Endothelial cell of umbilical vein (primary cell): ENCODE measurements at regions of chr12 and their contacts with region 1.

Region 1: GRCh38 chr12:52980693-52981423 is 25.4 kb upstream of the EIF4B start:
- DNase-seq: peak; percentile 91
- H3K4me3 ChIP-seq: no peak overlapping the region
- H3K27ac ChIP-seq: no peak overlapping the region
- H3K4me1 ChIP-seq: no peaks in the 10 kb centered on the region
- H3K27me3 ChIP-seq: peaks cover 3 to 4% of the 10 kb centered on the region in 2 experiments
- CTCF ChIP-seq: peak; percentile 92 to 100
- POLR2A ChIP-seq: no peak

Region 2: DNA sequence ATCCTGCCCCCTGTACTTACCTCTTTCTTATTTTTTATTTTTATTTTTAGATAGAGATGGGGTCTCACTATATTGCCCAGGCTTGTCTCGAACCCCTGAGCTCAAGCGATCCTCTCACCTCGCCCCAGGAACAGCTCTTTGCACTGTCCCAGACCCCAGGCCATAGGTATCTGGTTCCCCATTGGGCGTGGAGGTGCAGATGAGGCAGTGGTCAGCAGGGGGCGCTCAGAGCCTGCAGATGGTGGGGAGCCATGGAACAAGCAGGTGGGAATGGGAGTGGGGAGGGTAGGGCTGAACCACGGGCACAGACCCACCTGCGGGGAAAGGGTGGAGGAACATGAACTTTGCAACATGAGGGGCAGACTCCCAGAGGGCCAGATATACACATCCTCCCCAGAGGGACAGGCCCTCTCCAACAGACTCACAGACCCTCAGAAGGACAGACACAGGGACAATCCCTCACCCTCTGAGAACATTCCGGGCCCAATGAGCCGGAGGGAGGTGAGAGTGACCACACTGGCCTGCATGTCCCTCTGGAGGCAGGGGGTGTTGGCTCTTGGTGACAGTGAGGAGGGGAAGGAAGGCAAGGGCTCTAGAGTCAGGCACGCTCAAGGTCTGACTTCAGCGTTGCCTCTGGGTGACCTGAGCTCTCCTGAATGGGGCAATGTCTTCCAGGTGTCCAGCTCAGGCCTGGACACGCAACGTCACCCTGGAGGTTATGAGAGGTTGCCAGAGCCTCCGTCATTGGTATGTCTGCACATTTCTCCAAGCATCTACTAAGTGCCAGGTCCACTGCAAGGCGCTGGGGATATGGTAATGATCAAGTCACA is 823.9 kb before region 1 on chr12:
- CTCF ChIA-PET with region 1: interaction called, 5 read pairs
- POLR2A ChIA-PET with region 1: no interaction called
- dilution Hi-C with region 1: no loop called
- intact Hi-C with region 1: loop called (anchors 10 kb)
- DNase-seq: peak; percentile 58
- H3K4me3 ChIP-seq: no peak overlapping the region
- H3K27ac ChIP-seq: no peak overlapping the region
- H3K4me1 ChIP-seq: peaks cover 2% of the 10 kb centered on the region
- H3K27me3 ChIP-seq: no peaks in the 10 kb centered on the region
- CTCF ChIP-seq: peak; percentile 93 to 94
- POLR2A ChIP-seq: no peak

Region 3: DNA sequence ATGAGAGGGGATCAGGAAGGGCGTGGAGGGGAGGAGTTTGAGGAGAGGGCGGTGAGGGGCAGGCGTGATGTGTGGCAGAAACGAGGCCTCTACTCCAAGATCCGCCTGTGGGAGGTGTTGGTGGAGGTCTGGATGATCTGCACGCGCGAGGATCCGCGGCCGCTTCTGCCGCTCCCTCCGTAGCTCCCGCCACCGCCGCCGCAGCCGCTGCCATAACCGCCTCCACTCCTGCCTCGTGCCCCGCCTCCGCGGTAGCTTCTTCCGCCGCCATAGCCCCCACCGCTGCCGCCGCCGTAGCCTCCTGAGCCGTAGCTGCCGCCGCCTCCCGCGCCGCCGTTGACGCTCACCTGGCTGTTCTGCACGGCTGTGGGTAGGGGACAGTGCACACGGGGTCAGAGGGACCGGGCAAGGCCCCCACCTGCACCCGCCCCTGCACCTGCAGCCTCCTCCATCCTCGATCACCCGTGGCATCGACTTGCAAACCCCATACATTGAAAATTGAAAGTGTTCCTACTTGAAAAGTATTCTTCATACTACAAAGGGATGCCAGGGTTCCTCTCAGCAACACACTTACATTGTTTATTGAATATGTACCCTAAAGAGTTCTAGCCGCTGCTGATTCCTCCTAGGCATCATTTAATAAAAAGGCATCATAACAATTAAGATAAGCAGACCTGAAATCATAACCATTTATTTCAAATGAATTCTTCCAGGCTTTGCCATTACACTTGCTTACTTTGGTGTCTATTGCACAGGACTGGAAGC is 289.6 kb before region 1 on chr12:
- CTCF ChIA-PET with region 1: no interaction called
- POLR2A ChIA-PET with region 1: no interaction called
- dilution Hi-C with region 1: no loop called
- intact Hi-C with region 1: loop called (anchors 5 kb)
- DNase-seq: no peak
- H3K4me3 ChIP-seq: no peak overlapping the region
- H3K27ac ChIP-seq: no peak overlapping the region
- H3K4me1 ChIP-seq: no peaks in the 10 kb centered on the region
- H3K27me3 ChIP-seq: peaks cover 25 to 40% of the 10 kb centered on the region in 2 experiments
- CTCF ChIP-seq: no peak
- POLR2A ChIP-seq: no peak

Region 4: DNA sequence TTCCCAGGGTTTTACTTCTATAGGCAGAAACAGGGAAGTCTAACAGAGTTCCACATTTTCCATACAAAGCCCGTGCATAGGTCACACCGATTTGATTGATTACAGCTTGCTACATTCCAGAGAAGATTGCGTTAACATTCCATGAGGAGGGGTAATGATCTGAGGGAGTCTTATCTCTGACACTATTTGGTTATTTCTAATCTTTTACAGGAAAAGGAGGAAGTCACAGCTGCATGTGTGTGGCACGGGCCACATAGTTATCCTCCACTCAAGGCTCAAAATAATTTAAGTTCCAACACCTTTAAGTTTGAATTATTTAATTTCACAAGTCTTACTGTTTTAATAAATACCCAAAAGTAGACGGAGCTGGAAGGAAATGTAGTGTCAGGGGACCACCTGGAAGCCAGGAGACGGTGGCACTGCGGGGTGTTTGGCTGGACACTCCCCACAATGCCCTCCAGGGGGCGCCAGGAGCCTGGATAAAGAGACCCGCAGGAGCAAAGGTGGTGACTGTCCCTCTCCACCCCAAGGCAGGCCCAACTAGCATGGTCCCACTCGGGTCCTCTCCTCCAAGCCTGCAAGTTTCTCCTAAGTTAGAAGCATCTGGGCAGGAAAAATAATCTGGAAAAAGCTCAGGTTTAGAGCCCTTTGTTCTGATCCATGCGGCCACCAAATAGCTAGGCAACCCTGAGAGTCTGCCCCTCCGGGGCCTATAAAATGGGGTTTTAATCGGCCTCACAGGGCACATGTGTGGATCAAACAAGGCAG is 96.1 kb before region 1 on chr12:
- CTCF ChIA-PET with region 1: interaction called, 921 read pairs
- POLR2A ChIA-PET with region 1: no interaction called
- dilution Hi-C with region 1: loop called (anchors 25 kb)
- intact Hi-C with region 1: loop called (anchors 1 kb)
- DNase-seq: peak; percentile 60
- H3K4me3 ChIP-seq: no peak overlapping the region
- H3K27ac ChIP-seq: no peak overlapping the region
- H3K4me1 ChIP-seq: no peaks in the 10 kb centered on the region
- H3K27me3 ChIP-seq: no peaks in the 10 kb centered on the region
- CTCF ChIP-seq: peak; percentile 89 to 92
- POLR2A ChIP-seq: no peak

Region 5: DNA sequence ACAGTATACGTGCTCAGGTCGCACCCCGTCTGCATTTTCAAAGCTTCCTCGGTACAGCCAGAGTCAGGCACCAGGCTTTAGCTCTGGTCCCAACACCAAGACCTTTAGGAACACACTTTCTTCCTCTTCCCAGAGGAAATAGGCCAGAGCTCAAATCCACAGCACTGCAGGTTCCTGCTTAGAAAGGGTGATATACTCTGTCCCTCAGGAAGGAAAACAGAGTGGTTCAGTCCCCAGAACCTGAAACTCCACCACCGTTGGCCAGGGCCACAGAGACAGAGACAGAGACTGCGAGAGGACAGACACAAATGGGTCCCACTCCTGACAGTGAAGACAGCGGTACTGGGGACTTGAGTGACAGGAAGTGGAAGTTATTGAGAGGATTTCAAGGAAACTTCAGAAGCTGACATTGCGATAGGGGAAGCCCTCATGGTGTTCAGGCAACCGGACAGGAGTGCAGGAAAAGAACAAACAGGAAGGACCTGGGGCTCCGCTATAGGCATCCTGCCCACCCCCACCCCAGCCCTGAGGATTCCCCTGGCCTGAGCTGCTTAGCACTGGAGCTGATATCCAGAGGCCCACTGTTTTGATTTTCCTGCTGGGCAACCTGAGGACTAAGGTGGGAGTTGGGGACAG is 70.5 kb before region 1 on chr12:
- CTCF ChIA-PET with region 1: interaction called, 14 read pairs
- POLR2A ChIA-PET with region 1: interaction called, 7 read pairs
- dilution Hi-C with region 1: no loop called
- intact Hi-C with region 1: no loop called
- DNase-seq: no peak
- H3K4me3 ChIP-seq: no peak overlapping the region
- H3K27ac ChIP-seq: no peak overlapping the region
- H3K4me1 ChIP-seq: peaks cover 7% of the 10 kb centered on the region
- H3K27me3 ChIP-seq: no peaks in the 10 kb centered on the region
- CTCF ChIP-seq: no peak
- POLR2A ChIP-seq: no peak

Region 6: GRCh38 chr12:52956987-52957386 is 23.9 kb before region 1 on chr12:
- CTCF ChIA-PET with region 1: interaction called, 20 read pairs
- POLR2A ChIA-PET with region 1: no interaction called
- dilution Hi-C with region 1: no loop called
- intact Hi-C with region 1: no loop called
- DNase-seq: no peak
- H3K4me3 ChIP-seq: no peak overlapping the region
- H3K27ac ChIP-seq: no peak overlapping the region
- H3K4me1 ChIP-seq: no peaks in the 10 kb centered on the region
- H3K27me3 ChIP-seq: no peaks in the 10 kb centered on the region
- CTCF ChIP-seq: no peak
- POLR2A ChIP-seq: no peak

Region 7: GRCh38 chr12:53025250-53025649 is 44.4 kb after region 1 on chr12:
- CTCF ChIA-PET with region 1: no interaction called
- POLR2A ChIA-PET with region 1: no interaction called
- dilution Hi-C with region 1: no loop called
- intact Hi-C with region 1: no loop called
- DNase-seq: no peak
- H3K4me3 ChIP-seq: no peak overlapping the region
- H3K27ac ChIP-seq: no peak overlapping the region
- H3K4me1 ChIP-seq: no peaks in the 10 kb centered on the region
- H3K27me3 ChIP-seq: no peaks in the 10 kb centered on the region
- CTCF ChIP-seq: no peak
- POLR2A ChIP-seq: no peak